Heart left ventricle (tissue), 16 donors: ENCODE measurements at regions of chr12 and their contacts with region 1.

Region 1: GRCh38 chr12:3597526-3598210 is 106.7 kb downstream of the PRMT8 start:
- DNase-seq: no peak
- ATAC-seq: no peak
- H3K4me3 ChIP-seq: no peak overlapping the region
- H3K27ac ChIP-seq: no peak overlapping the region
- H3K4me1 ChIP-seq: peaks cover 0 to 26% (median 6%) of the 10 kb centered on the region in 12 donors
- H3K27me3 ChIP-seq: peaks cover 0 to 14% (median 0%) of the 10 kb centered on the region in 9 donors
- CTCF ChIP-seq: no peak
- POLR2A ChIP-seq: no peak

Region 2: GRCh38 chr12:3533703-3534386 is 63.8 kb before region 1 on chr12:
- intact Hi-C with region 1: loop called in 3 of 10 experiments (anchors 1 to 5 kb)
- DNase-seq: peak in 4 of 5 donors; percentile 65 to 86 (median 73)
- ATAC-seq: peak; percentile 78 to 87 (median 84)
- H3K4me3 ChIP-seq: no peak overlapping the region
- H3K27ac ChIP-seq: peak overlapping the region in 11 of 12 donors; percentile 24 to 81 (median 69)
- H3K4me1 ChIP-seq: peaks cover 0 to 44% (median 5%) of the 10 kb centered on the region in 12 donors
- H3K27me3 ChIP-seq: peaks cover 0 to 4% (median 0%) of the 10 kb centered on the region in 9 donors
- CTCF ChIP-seq: peak in 7 of 12 donors; percentile 8 to 49 (median 32)
- POLR2A ChIP-seq: no peak

Region 3: DNA sequence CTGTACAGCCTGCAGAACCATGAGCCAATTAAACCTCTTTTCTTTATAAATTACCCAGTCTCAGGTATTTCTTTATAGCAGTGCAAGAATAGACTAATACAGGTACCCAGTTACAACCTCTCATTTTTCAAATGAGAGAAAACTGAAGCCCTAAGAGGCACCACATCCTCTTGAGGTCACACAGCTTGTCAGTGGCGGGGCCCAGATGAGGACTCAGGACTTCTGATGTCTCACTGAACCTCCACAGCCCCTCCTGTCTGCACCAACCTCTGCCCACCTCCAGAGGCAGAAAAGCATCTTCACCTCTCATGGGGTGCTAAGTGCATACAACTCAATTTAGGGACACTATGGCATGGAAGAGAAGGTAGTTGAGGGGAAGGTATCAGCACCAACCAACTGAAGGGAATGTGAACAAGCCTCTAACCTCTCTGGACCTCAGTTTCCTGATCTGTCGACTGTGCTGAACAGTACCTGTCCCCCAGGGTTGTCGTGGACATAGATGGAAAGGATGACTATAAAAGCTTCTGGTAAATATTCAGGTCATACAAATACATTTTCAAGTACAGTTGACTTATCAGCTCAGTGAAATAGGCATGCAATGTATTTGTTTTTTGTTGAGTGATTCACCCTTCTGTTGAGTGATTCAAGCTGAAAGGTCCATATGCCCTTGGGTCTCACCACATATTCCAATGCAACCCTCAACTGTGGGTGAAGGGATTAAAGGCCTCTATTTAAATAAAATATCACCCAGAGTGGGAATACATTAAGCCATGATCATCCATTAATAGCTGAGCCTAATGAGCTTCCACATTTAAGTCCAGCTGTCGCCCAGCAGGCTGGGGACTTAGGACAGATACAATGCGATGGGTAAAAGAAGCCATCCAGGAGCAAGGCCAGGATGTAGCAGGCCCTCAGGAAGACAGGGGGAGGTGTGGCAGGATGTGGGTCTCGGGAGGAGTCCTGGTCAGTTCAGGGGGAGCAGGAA is 34.9 kb after region 1 on chr12:
- intact Hi-C with region 1: no loop called
- DNase-seq: no peak
- ATAC-seq: no peak
- H3K4me3 ChIP-seq: no peak overlapping the region
- H3K27ac ChIP-seq: no peak overlapping the region
- H3K4me1 ChIP-seq: peaks cover 0 to 8% (median 0%) of the 10 kb centered on the region in 12 donors
- H3K27me3 ChIP-seq: no peaks in the 10 kb centered on the region
- CTCF ChIP-seq: no peak
- POLR2A ChIP-seq: no peak